ENCODE measurements at regions of chr2 and their contacts with region 1.

Region 1: GRCh38 chr2:149017116-149017985 is 21.1 kb upstream of the LYPD6B start:
- DNase-seq: peak; percentile 83 to 87 (median 86)
- ATAC-seq: peak; percentile 74
- H3K4me3 ChIP-seq: no peak overlapping the region
- H3K27ac ChIP-seq: no peak overlapping the region
- H3K4me1 ChIP-seq: no peaks in the 10 kb centered on the region
- H3K27me3 ChIP-seq: no peaks in the 10 kb centered on the region
- CTCF ChIP-seq: peak; percentile 73 to 89 (median 85)
- POLR2A ChIP-seq: no peak

Region 2: DNA sequence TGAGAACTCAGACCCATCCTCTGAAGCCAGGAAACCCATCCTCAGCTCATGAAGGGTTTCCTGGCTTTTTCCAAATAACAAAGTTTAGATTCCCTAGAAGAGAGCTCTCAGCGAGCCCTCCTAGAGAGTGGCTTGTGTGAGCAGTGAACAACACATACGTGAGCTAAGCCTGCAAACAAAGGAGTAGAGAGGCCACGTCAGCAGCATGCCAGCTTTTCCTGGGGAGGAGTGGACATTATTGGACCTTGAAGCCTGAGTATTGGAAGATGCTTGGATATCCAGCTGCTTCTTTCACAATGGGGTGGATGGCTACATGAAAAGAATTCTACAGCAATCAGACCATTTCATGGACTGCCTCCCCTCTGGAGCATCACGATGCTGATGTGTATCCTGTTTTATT is 121.2 kb before region 1 on chr2:
- intact Hi-C with region 1: no loop called
- DNase-seq: no peak
- ATAC-seq: no peak
- H3K4me3 ChIP-seq: no peak overlapping the region
- H3K27ac ChIP-seq: no peak overlapping the region
- H3K4me1 ChIP-seq: no peaks in the 10 kb centered on the region
- H3K27me3 ChIP-seq: no peaks in the 10 kb centered on the region
- CTCF ChIP-seq: no peak
- POLR2A ChIP-seq: no peak

Region 3: GRCh38 chr2:149313512-149313972 is 296.2 kb after region 1 on chr2:
- intact Hi-C with region 1: loop called (anchors 5 kb)
- DNase-seq: peak; percentile 36 to 57 (median 48)
- ATAC-seq: peak; percentile 89
- H3K4me3 ChIP-seq: no peak overlapping the region
- H3K27ac ChIP-seq: no peak overlapping the region
- H3K4me1 ChIP-seq: peaks cover 4% of the 10 kb centered on the region
- H3K27me3 ChIP-seq: no peaks in the 10 kb centered on the region
- CTCF ChIP-seq: peak; percentile 71 to 84 (median 77)
- POLR2A ChIP-seq: no peak

Region 4: DNA sequence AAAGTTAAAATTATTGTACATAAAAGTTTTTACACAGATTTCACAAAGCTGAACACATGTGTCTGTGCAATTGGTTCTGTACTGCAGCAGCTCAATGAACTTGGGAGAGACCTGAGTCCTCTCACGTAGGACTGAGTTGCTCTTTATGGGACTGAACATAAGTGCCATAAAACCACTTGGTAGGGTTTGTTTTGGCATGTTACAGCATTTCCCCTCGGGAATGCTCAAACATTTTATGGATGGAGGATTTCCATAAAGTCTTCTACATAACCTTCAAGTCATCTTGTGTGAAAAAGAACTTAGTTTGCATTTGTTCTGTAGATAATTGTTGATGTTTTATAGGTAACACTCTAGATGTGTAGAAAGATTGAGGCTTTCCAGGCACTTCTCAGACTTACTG is 328.9 kb after region 1 on chr2:
- intact Hi-C with region 1: no loop called
- DNase-seq: no peak
- ATAC-seq: no peak
- H3K4me3 ChIP-seq: no peak overlapping the region
- H3K27ac ChIP-seq: no peak overlapping the region
- H3K4me1 ChIP-seq: no peaks in the 10 kb centered on the region
- H3K27me3 ChIP-seq: no peaks in the 10 kb centered on the region
- CTCF ChIP-seq: no peak
- POLR2A ChIP-seq: no peak

Region 5: GRCh38 chr2:149561309-149561926 is 544.1 kb after region 1 on chr2:
- intact Hi-C with region 1: loop called (anchors 5 kb)
- DNase-seq: peak in 3 of 4 donors; percentile 27 to 36 (median 30)
- ATAC-seq: peak; percentile 51
- H3K4me3 ChIP-seq: no peak overlapping the region
- H3K27ac ChIP-seq: no peak overlapping the region
- H3K4me1 ChIP-seq: peaks cover 6% of the 10 kb centered on the region
- H3K27me3 ChIP-seq: no peaks in the 10 kb centered on the region
- CTCF ChIP-seq: peak; percentile 79 to 100 (median 87)
- POLR2A ChIP-seq: no peak